Activated CD8-positive, alpha-beta T cell treated with anti-CD3 and anti-CD28 coated beads, Interleukin-2, amount 10 ng/mL, durations not matched to agents 7 days and 5 days (primary cell): ENCODE measurements at regions of chr1 and their contacts with region 1.

Region 1: GRCh38 chr1:97920832-97921571 is at the start of gene DPYD:
- DNase-seq: peak; percentile 92
- ATAC-seq: peak; percentile 91
- H3K4me3 Mint-ChIP-seq: peak within 1 kb of the TSS; percentile 92
- H3K27ac Mint-ChIP-seq: peak within 1 kb of the TSS; percentile 95
- H3K4me1 Mint-ChIP-seq: peaks cover 52% of the 10 kb centered on the region
- H3K27me3 Mint-ChIP-seq: no peaks in the 10 kb centered on the region
- total RNA-seq, gene DPYD: 41.1 to 43.3 TPM

Region 2: GRCh38 chr1:97943354-97943753 is 22.4 kb after region 1 on chr1:
- CTCF ChIA-PET with region 1: interaction called, 3 read pairs
- POLR2A ChIA-PET with region 1: interaction called, 11 read pairs
- DNase-seq: no peak
- ATAC-seq: no peak
- H3K4me3 Mint-ChIP-seq: no peak overlapping the region
- H3K27ac Mint-ChIP-seq: peak overlapping the region; percentile 18
- H3K4me1 Mint-ChIP-seq: peaks cover 42% of the 10 kb centered on the region
- H3K27me3 Mint-ChIP-seq: no peaks in the 10 kb centered on the region